Dendritic cell treated with granulocyte-macrophage colony-stimulating factor and Interleukin-4, amounts not matched to agents 40 ng/mL and 50 ng/mL, for 4 days (primary cell): ENCODE measurements at regions of chrX and their contacts with region 1.

Region 1: DNA sequence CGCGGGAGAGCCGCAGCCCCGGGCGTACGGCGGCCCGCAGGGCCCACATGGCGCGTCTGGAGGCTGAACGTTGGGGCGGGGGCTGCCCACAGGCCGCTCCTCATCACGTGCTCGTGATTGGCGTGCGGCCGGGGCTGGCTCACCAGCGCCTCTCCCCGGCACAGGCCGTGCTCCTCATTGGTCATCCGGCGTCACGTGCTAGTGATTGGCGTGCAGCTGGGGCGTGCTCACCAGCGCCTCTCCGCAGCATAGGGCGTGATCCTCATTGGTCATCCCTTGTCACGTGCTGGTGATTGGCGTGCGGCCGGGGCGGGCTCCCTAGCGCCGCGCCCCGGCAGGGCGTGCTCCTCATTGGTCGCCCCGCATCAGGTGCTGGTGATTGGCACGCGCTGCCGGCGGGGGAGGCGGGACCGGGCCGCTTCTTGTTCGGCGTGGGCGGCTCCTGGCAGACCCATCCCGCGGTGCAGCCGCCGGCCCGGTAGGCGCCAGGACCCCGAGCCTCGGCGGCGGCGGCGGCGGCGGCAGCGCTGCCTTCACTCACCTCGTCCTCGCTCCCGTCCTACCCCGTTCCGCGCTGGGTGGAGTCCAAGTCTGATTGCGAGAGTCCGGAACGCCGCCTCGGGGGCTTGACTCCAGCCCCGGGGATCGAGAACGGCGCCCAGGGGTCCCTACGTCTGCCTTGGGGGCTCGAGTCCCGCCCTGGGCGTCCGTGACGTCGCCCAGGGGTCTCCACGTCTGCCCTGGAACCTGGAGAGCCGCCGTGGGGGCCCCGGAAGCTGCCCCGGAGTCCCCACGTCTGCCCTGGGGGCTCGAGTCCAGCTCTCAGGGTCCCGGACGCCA is at the start of gene GTPBP6:
- H3K4me3 Mint-ChIP-seq: peak within 1 kb of the TSS; percentile 82
- H3K27ac Mint-ChIP-seq: peak within 1 kb of the TSS; percentile 84
- H3K4me1 Mint-ChIP-seq: peaks cover 14% of the 10 kb centered on the region
- H3K27me3 Mint-ChIP-seq: peaks cover 25% of the 10 kb centered on the region

Region 2: DNA sequence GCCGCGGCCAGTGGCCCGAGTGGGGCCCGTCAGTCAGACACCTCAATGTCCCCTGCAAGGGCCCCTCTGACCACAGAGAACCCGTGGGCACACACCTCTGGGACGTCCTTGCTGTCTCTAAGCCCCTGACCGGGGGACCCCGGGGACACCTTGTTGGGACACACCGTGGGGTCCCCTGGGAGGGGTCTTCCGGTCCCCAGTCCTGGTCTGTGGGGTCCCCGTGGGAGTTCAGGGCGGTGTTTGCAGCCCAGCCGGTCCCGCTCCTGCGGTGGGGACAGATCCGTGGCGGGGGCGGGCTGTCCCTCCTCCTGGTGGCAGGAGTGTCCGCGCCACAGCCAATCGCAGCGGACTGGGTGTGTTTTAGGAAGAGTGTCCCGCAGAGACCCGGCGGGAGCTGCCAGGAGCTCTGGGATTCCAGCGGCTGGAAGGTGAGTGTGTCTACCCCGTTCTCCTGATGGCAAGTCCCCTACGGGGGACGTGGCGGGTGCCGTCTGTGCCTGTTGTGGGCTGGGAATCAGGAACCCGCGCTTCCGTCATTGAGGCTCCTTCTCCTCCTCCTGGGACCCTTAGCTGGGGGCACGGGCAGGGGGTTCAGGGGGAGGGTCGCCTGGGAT is 42.9 kb before region 1 on chrX:
- intact Hi-C with region 1: loop called (anchors 2 kb)
- H3K4me3 Mint-ChIP-seq: peak overlapping the region; percentile 88
- H3K27ac Mint-ChIP-seq: peak overlapping the region; percentile 86
- H3K4me1 Mint-ChIP-seq: peaks cover 36% of the 10 kb centered on the region
- H3K27me3 Mint-ChIP-seq: no peaks in the 10 kb centered on the region

Region 3: DNA sequence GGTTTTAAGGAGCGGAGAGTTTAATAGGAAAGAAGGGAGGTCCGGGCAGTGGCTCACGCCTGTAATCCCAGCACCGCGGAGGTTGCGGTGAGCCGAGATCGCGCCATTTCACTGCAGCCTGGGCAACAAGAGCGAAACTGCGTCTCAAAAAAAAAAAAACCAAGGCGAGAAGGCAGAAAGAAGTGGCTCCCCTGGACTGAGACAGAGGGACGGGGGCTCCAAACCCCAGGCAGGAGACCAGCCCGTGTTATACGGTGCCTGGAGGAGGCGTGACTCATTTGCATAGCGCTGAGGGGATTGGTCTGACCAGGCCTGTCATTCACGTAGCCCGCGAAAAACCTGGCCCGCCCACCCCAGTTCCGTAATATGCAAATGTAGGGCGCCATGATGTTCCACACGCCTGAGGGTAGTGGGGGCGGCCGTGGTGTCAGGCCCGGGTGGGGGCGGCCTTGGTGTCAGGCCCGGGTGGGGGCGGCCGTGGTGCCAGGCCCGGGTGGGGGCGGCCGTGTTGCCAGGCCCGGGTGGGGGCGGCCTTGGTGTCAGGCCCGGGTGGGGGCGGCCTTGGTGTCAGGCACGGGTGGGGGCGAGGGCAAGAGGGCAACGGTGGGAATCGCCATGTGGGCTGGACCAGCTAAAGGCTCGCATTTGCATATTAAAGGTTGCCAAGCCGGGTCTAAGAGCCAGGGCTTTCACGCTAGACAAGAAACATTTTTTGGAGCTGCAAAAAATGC is 35.7 kb before region 1 on chrX:
- intact Hi-C with region 1: loop called (anchors 1 kb)
- H3K4me3 Mint-ChIP-seq: peak overlapping the region; percentile 98
- H3K27ac Mint-ChIP-seq: peak overlapping the region; percentile 77
- H3K4me1 Mint-ChIP-seq: peaks cover 21% of the 10 kb centered on the region
- H3K27me3 Mint-ChIP-seq: no peaks in the 10 kb centered on the region

Region 4: GRCh38 chrX:386768-387575 is 68.0 kb after region 1 on chrX and contains the start of gene PPP2R3B:
- intact Hi-C with region 1: loop called (anchors 1 kb)
- H3K4me3 Mint-ChIP-seq: peak within 1 kb of the TSS; percentile 96
- H3K27ac Mint-ChIP-seq: peak within 1 kb of the TSS; percentile 99
- H3K4me1 Mint-ChIP-seq: peaks cover 5% of the 10 kb centered on the region
- H3K27me3 Mint-ChIP-seq: no peaks in the 10 kb centered on the region

Region 5: GRCh38 chrX:455199-455598 is 136.2 kb after region 1 on chrX:
- intact Hi-C with region 1: no loop called
- H3K4me3 Mint-ChIP-seq: no peak overlapping the region
- H3K27ac Mint-ChIP-seq: no peak overlapping the region
- H3K4me1 Mint-ChIP-seq: no peaks in the 10 kb centered on the region
- H3K27me3 Mint-ChIP-seq: no peaks in the 10 kb centered on the region